Breast epithelium (tissue), 4 donors: ENCODE measurements at regions of chr7 and their contacts with region 1.

Region 1: DNA sequence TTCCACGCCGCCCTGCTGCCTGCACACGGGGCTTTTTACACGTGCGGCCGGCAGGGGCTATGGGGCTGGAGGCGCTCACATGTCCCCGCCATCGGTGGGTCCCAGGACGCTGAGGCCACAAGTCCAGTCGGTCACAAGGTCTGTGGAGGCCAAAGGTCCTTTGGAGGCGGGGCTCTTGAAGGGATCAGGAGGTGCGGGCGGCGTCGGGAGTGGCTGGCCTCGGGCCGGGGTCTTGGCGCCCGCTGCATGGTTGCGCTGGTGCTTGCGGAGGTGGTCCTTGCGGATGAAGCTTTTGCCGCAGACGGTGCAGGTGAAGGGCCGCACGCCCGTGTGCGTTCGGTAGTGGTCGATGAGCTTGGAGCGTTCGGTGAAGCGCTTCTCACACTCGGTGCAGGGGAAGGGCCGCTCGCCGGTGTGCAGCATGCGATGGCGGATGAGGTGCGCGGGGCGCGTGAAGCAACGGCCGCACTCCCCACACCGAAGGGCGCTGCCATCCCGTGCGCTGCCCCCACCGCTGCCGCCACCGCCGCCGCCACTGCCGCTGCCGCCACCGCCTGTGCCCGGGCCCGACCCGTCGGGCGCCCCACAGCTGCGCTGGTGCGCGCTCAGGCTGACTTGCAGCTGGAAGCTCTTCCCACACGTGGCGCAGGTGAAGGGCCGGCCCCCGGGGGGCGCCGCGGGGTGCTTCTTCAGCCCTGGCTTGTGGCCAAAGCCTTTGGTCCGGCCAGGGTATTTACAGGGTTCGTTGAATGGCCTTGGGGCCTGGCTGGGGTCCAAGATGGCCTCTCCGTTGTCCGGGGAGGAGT is 13.7 kb upstream of the ZNF777 start:
- DNase-seq: no peak
- H3K4me3 ChIP-seq: no peak overlapping the region
- H3K27ac ChIP-seq: no peak overlapping the region
- H3K4me1 ChIP-seq: no peaks in the 10 kb centered on the region
- H3K27me3 ChIP-seq: no peaks in the 10 kb centered on the region
- CTCF ChIP-seq: no peak
- POLR2A ChIP-seq: no peak

Region 2: DNA sequence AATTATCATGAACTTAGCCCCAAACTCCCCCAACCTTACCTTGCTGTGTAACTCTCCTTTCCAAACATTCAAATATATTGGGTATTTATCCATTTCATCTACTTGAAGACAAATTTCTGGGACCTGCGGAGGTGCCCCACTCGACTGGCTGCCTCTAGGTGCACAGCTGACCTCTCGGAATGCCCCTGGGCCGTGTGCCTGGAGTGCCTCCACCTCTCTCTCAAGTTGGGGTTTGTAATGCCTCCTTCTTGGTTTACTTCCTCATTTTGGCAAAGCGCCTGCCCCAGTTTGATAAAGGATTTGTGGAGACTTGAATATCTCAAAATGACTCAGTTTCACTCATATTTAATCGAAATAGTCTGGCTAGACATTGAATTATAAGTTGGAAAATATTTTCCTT is 30.2 kb before region 1 on chr7:
- intact Hi-C with region 1: no loop called
- DNase-seq: no peak
- H3K4me3 ChIP-seq: no peak overlapping the region
- H3K27ac ChIP-seq: no peak overlapping the region
- H3K4me1 ChIP-seq: no peaks in the 10 kb centered on the region
- H3K27me3 ChIP-seq: no peaks in the 10 kb centered on the region
- CTCF ChIP-seq: no peak
- POLR2A ChIP-seq: no peak

Region 3: GRCh38 chr7:149620961-149621360 is 146.4 kb after region 1 on chr7:
- intact Hi-C with region 1: no loop called
- DNase-seq: no peak
- H3K4me3 ChIP-seq: no peak overlapping the region
- H3K27ac ChIP-seq: no peak overlapping the region
- H3K4me1 ChIP-seq: peaks cover 7% of the 10 kb centered on the region in 2 donors
- H3K27me3 ChIP-seq: no peaks in the 10 kb centered on the region
- CTCF ChIP-seq: no peak
- POLR2A ChIP-seq: no peak

Region 4: GRCh38 chr7:149838224-149838947 is 363.9 kb after region 1 on chr7 and contains the start of gene ZNF862:
- intact Hi-C with region 1: loop called (anchors 10 kb)
- DNase-seq: peak; percentile 93 to 94
- H3K4me3 ChIP-seq: peak within 1 kb of the TSS; percentile 90 to 98 (median 95)
- H3K27ac ChIP-seq: peak within 1 kb of the TSS; percentile 93 to 97
- H3K4me1 ChIP-seq: peaks cover 0 to 7% of the 10 kb centered on the region in 2 donors
- H3K27me3 ChIP-seq: no peaks in the 10 kb centered on the region
- CTCF ChIP-seq: no peak
- POLR2A ChIP-seq: peak; percentile 36
- total RNA-seq, gene ZNF862: 21.4 to 27.8 (median 27.2) TPM

Region 5: GRCh38 chr7:151198945-151199848 is 1724.7 kb after region 1 on chr7:
- intact Hi-C with region 1: no loop called
- DNase-seq: no peak
- H3K4me3 ChIP-seq: peak overlapping the region in 1 of 3 donors; percentile 25
- H3K27ac ChIP-seq: no peak overlapping the region
- H3K4me1 ChIP-seq: no peaks in the 10 kb centered on the region
- H3K27me3 ChIP-seq: peaks cover 0 to under 1% of the 10 kb centered on the region in 2 donors
- CTCF ChIP-seq: no peak
- POLR2A ChIP-seq: no peak